ENCODE measurements at regions of chr3 and their contacts with region 1.

Region 1: GRCh38 chr3:51498876-51499738 is 708 bp downstream of the DCAF1 start:
- DNase-seq: peak; percentile 69
- ATAC-seq: peak; percentile 90
- H3K4me3 ChIP-seq: peak overlapping the region; percentile 76 to 84
- H3K27ac ChIP-seq: peak overlapping the region; percentile 61
- H3K4me1 ChIP-seq: 0 out of 2 replicates have a peak, but pooled peaks cover 3% of the 10 kb centered on the region
- H3K27me3 ChIP-seq: no peaks in the 10 kb centered on the region
- CTCF ChIP-seq: no peak

Region 2: GRCh38 chr3:50632450-50632849 is 866.7 kb before region 1 on chr3:
- CTCF ChIA-PET with region 1: interaction called, 14 read pairs
- POLR2A ChIA-PET with region 1: no interaction called
- in situ Hi-C with region 1: no loop called
- intact Hi-C with region 1: no loop called
- DNase-seq: no peak
- ATAC-seq: no peak
- H3K4me3 ChIP-seq: no peak overlapping the region
- H3K27ac ChIP-seq: no peak overlapping the region
- H3K4me1 ChIP-seq: no peaks in the 10 kb centered on the region
- H3K27me3 ChIP-seq: no peaks in the 10 kb centered on the region
- CTCF ChIP-seq: no peak

Region 3: GRCh38 chr3:51216291-51216690 is 282.8 kb before region 1 on chr3:
- CTCF ChIA-PET with region 1: no interaction called
- POLR2A ChIA-PET with region 1: no interaction called
- in situ Hi-C with region 1: no loop called
- intact Hi-C with region 1: no loop called
- DNase-seq: no peak
- ATAC-seq: no peak
- H3K4me3 ChIP-seq: no peak overlapping the region
- H3K27ac ChIP-seq: no peak overlapping the region
- H3K4me1 ChIP-seq: no peaks in the 10 kb centered on the region
- H3K27me3 ChIP-seq: no peaks in the 10 kb centered on the region; the same call in 1 of the 2 replicates
- CTCF ChIP-seq: no peak

Region 4: GRCh38 chr3:51538459-51539290 is 39.6 kb after region 1 on chr3 and contains the start of gene RAD54L2:
- CTCF ChIA-PET with region 1: interaction called, 4 read pairs
- POLR2A ChIA-PET with region 1: interaction called, 20 read pairs
- in situ Hi-C with region 1: no loop called
- intact Hi-C with region 1: no loop called
- DNase-seq: no peak
- ATAC-seq: peak; percentile 97
- H3K4me3 ChIP-seq: peak within 1 kb of the TSS; percentile 83 to 86
- H3K27ac ChIP-seq: peak within 1 kb of the TSS; percentile 81
- H3K4me1 ChIP-seq: no peaks in the 10 kb centered on the region
- H3K27me3 ChIP-seq: no peaks in the 10 kb centered on the region
- CTCF ChIP-seq: peak; percentile 62; the same call in 1 of the 2 replicates
- total RNA-seq, gene RAD54L2: 18.9 TPM

Region 5: GRCh38 chr3:51670823-51671733 is 172.0 kb after region 1 on chr3 and contains the start of gene TEX264:
- CTCF ChIA-PET with region 1: interaction called, 26 read pairs
- POLR2A ChIA-PET with region 1: no interaction called
- in situ Hi-C with region 1: no loop called
- intact Hi-C with region 1: loop called (anchors 2 kb)
- DNase-seq: no peak
- ATAC-seq: peak; percentile 84
- H3K4me3 ChIP-seq: peak within 1 kb of the TSS; percentile 79 to 86
- H3K27ac ChIP-seq: peak within 1 kb of the TSS; percentile 86
- H3K4me1 ChIP-seq: peaks cover 20% of the 10 kb centered on the region
- H3K27me3 ChIP-seq: no peaks in the 10 kb centered on the region
- CTCF ChIP-seq: no peak
- total RNA-seq, gene TEX264: 45.8 TPM